GM23248 (cell line): ENCODE measurements at regions of chr9 and their contacts with region 1.

Region 1: DNA sequence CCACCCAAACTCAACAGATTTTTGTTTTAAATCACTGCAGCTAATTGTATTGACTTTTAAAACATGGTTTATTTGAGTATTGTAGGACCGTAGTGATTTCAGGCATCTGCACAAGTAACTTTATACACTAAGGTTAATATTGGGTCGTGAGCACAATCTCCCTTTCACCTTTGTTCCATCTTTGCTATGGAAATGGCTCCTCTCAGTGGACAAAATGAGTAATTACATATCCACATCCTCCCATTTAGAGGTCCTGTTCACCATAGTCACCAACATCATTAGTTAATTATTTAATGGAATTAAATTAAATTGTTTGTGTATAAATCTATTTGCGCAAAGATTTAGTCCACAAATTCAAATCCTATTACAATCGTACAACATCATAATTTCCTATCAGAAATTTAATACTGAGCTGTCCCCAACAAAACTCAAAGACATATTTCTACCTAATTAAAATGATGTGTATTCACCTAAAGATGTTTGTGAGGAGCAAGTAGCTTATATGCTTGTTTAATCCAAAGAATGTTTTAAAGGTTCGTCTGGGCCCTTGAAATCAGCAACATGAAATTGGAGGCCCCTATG is 173.0 kb upstream of the DAPK1 start:
- DNase-seq: peak; percentile 75
- H3K4me3 ChIP-seq: no peak overlapping the region
- H3K27ac ChIP-seq: no peak overlapping the region
- H3K4me1 ChIP-seq: peaks cover 17% of the 10 kb centered on the region
- H3K27me3 ChIP-seq: no peaks in the 10 kb centered on the region

Region 2: DNA sequence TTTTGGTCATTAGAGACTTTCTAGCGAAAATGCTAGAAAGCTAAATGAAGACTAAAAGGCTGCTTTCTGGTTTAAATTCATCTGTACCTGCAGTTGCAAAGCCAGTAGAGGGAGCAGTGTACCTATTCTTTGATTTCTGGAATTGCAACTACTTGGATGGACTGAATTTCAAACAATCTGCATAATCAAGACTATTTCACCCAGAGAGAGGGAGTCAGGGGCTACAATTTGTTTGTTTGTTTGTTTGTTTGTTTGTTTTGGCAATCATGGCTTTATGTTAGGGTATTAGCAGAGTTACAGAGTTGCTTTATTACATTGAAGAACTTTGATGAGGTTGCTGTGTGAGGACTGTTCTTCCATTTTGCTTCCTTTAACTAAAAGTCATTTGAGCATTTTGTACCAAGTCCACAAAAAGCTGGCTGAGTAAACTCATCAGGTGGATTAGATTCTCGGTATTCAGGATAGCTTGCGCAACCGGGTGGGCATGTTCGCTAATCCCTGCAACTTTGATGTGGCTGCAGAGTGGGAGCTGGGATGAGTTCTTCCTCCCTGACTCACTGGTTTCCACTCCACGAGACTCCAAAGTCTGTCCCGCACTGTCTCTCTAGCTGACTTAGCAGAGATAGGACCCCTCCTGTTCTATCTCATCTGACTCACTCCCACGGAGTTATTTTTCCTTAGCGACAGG is 890.5 kb before region 1 on chr9:
- in situ Hi-C with region 1: loop called (anchors 5 kb)
- DNase-seq: peak; percentile 81
- H3K4me3 ChIP-seq: peak overlapping the region; percentile 58
- H3K27ac ChIP-seq: peak overlapping the region; percentile 10; the same call in 1 of the 2 replicates
- H3K4me1 ChIP-seq: peaks cover 10% of the 10 kb centered on the region; the same call in 1 of the 2 replicates
- H3K27me3 ChIP-seq: no peaks in the 10 kb centered on the region

Region 3: DNA sequence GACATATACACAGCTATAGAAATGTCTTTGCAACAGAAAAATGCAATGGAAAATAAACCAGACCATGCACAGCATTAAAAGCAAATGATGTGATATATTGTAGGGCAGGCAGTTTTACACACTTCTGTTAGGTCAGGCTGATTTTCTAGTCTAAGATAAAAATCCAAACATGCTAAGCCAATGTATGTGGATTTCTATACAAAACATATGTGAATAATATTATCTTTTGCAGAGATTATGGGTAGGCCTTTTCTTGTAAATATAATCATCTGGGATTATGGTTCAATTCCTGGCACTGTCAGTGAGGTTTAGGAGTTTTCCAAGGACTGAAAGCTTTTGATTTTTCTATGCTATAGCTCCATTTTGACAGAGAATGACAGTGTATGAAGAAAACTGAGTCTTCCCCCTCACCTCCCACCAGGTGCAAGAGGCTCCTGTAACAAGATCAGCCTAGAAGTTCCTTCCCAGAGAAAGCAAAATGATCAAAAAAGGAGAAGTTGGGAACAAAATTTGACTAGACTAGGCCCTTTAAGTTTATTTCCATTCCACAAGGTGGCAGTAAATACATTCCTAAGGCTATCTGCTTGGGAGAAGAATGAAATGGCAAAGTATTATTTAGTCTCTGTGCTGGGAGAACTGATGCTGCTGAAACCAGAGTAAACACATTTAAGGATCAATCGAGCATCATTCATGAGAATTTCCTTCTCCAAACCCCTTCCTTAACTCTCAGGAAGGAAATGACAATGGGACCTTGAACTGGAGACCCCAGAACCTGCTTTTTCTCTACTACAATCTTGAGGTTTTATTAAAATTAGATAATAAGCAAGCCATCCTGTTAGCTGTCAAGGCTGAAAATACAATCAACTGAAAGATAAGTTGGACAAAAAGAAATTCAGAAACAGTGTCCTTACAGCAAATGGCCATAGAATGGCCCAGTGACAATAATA is 837.5 kb before region 1 on chr9:
- in situ Hi-C with region 1: loop called (anchors 10 kb)
- DNase-seq: peak; percentile 77
- H3K4me3 ChIP-seq: no peak overlapping the region
- H3K27ac ChIP-seq: no peak overlapping the region
- H3K4me1 ChIP-seq: peaks cover 5% of the 10 kb centered on the region; the same call in 1 of the 2 replicates
- H3K27me3 ChIP-seq: no peaks in the 10 kb centered on the region

Region 4: GRCh38 chr9:86978922-86979474 is 345.7 kb before region 1 on chr9:
- in situ Hi-C with region 1: loop called (anchors 10 kb)
- DNase-seq: no peak
- H3K4me3 ChIP-seq: no peak overlapping the region
- H3K27ac ChIP-seq: no peak overlapping the region
- H3K4me1 ChIP-seq: peaks cover 57% of the 10 kb centered on the region
- H3K27me3 ChIP-seq: no peaks in the 10 kb centered on the region

Region 5: GRCh38 chr9:87039809-87040392 is 284.8 kb before region 1 on chr9:
- in situ Hi-C with region 1: no loop called
- DNase-seq: peak; percentile 68
- H3K4me3 ChIP-seq: no peak overlapping the region
- H3K27ac ChIP-seq: peak overlapping the region; percentile 41; the same call in 1 of the 2 replicates
- H3K4me1 ChIP-seq: peaks cover 20% of the 10 kb centered on the region
- H3K27me3 ChIP-seq: no peaks in the 10 kb centered on the region

Region 6: DNA sequence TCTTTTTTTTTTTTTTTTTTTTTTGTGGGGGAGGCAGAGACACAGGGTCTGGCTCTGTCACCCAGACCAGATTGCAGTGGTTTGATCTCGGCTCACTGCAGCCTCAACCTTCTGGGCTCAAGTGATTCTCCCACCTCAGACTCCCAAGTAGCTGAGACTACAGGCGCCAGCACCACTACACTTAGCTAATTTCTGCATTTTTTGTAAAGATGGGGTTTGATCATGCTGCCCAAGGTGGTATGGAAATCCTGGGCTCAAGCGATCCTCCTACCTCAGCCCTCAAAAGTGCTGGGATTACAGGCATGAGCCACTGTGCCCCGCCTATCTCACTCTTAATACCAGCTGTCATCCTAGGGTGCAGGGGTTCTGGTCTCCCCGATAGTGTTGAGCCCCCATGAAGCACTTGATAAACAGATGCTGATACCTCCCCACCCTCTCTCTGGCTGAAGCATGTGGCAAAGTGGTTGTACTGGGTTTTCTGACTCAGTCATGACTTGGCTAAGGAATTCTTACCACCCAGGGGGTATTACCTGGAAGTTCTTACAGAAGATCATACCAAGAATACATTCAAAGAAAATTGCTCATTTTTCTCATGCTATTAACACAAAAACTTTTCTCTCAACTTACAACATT is 62.8 kb after region 1 on chr9:
- in situ Hi-C with region 1: no loop called
- DNase-seq: peak; percentile 5
- H3K4me3 ChIP-seq: no peak overlapping the region
- H3K27ac ChIP-seq: no peak overlapping the region
- H3K4me1 ChIP-seq: peaks cover 7% of the 10 kb centered on the region
- H3K27me3 ChIP-seq: peaks cover 4% of the 10 kb centered on the region; the same call in 1 of the 2 replicates

Region 7: DNA sequence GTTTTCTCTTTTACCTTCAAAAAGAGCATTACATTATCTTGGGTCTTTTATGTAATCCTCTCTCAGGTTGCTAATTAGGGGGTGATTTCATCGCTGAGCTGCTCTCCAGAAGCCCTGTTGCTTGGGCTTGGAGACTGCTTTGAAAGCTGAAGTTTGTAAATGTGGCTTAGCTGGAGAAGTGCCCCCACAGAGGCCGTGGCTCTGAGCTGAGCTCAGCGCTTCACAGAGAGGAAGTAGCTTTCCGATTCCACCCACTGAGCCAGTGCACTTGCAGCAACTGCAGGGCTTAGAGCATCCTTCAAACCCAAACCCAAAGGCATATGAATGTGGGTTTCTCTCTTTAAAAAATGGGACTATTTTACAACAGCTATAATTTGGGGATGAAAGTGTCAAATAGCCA is 1196.6 kb after region 1 on chr9:
- in situ Hi-C with region 1: no loop called
- DNase-seq: no peak
- H3K4me3 ChIP-seq: no peak overlapping the region
- H3K27ac ChIP-seq: no peak overlapping the region
- H3K4me1 ChIP-seq: peaks cover 15% of the 10 kb centered on the region
- H3K27me3 ChIP-seq: no peaks in the 10 kb centered on the region